WTC11 (cell line): ENCODE measurements at regions of chr17 and their contacts with region 1.

Region 1: DNA sequence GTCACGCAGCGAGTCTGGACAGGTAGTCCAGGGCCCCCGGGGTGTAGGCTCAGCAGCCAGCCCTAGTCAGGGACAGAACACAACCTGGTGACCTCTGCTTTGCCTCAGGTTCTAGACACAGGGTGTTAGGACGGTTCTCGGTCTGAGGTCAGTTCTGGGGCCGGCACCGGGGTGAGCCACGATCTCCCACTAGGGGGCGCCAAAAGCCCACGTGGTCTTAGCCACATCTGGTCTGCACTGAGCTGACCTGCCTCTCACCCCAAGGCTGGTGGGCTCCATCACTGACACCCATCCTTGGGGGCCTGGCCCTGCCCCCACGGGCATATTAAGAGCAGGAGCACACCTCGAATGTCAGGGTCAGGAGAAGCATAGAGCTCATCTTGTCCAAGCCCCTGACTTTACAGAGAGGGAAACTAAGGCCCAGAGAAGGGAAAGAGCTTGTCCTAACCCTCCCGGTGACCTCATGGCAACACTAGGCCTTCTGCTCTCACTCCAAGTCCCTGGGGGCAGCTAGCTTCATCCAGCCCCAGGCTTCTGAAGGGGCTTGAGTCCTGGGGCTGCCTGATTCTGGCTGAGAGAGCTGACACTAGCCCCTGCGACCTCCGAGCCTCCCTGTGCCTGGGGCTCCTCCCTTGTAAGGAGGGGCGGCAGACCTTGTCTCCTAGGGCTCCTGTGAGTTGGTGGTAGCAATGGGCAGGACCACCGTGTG is 9.0 kb downstream of the SLC5A10 start:
- DNase-seq: peak; percentile 93
- ATAC-seq: peak; percentile 95
- H3K4me3 Mint-ChIP-seq: no peak overlapping the region
- H3K27ac Mint-ChIP-seq: no peak overlapping the region
- H3K4me1 Mint-ChIP-seq: peaks cover 8% of the 10 kb centered on the region
- H3K27me3 Mint-ChIP-seq: no peaks in the 10 kb centered on the region
- CTCF ChIP-seq: peak; percentile 94

Region 2: GRCh38 chr17:18889658-18890057 is 71.3 kb before region 1 on chr17:
- CTCF ChIA-PET with region 1: no interaction called
- POLR2A ChIA-PET with region 1: no interaction called
- DNase-seq: no peak
- ATAC-seq: no peak
- H3K4me3 Mint-ChIP-seq: no peak overlapping the region
- H3K27ac Mint-ChIP-seq: no peak overlapping the region
- H3K4me1 Mint-ChIP-seq: no peaks in the 10 kb centered on the region
- H3K27me3 Mint-ChIP-seq: no peaks in the 10 kb centered on the region
- CTCF ChIP-seq: no peak

Region 3: DNA sequence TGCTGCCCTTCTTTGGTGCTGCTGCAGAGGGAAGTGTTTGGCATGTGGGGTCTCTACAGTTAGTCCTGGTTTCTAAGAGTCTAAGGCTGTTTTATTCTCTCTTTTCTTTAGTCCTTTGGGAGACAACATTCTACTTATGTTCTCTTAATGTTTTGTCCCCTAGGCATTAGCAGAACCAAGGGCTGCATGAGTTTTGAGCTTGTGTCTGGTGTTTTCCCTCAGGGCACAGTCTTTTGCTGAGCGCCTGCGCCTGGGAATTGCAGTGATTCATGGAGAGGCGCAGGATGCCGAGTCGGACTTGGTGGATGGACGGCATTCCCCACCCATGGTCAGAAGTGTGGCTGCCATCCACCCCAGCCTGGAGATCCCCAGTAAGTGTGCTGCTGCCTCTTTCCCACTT is 50.1 kb before region 1 on chr17:
- CTCF ChIA-PET with region 1: no interaction called
- POLR2A ChIA-PET with region 1: no interaction called
- DNase-seq: no peak
- ATAC-seq: no peak
- H3K4me3 Mint-ChIP-seq: no peak overlapping the region
- H3K27ac Mint-ChIP-seq: no peak overlapping the region
- H3K4me1 Mint-ChIP-seq: no peaks in the 10 kb centered on the region
- H3K27me3 Mint-ChIP-seq: no peaks in the 10 kb centered on the region
- CTCF ChIP-seq: no peak

Region 4: DNA sequence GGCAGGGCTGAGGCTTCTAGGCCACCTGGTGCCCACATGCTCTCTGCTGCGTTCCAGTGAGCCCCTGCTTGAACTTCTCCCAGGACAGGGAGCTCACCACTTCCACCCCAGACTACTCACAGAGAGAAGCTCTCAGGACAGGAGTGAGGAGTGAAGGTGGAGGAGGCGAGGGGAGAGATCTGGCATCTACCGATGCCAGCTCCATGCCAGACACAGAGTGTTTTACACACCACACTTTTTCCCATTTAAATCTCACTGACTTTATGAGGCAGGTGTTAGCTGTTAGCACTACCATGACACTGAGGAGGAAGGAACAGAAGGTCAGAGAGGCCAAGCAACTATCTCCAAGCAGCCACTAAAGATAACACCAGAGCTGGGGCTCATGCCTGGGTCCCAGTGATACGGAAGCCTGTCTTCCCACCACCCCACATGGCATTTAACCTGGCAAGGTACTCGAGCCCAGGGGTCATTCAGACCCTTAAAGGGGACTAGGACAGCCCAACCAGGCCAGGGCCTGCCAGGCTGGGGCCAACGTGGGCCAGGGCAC is 36.8 kb after region 1 on chr17:
- CTCF ChIA-PET with region 1: interaction called, 20 read pairs
- POLR2A ChIA-PET with region 1: no interaction called
- DNase-seq: no peak
- ATAC-seq: no peak
- H3K4me3 Mint-ChIP-seq: no peak overlapping the region
- H3K27ac Mint-ChIP-seq: no peak overlapping the region; the same call in 1 of the 2 replicates
- H3K4me1 Mint-ChIP-seq: peaks cover 20% of the 10 kb centered on the region
- H3K27me3 Mint-ChIP-seq: no peaks in the 10 kb centered on the region
- CTCF ChIP-seq: no peak

Region 5: GRCh38 chr17:19004421-19005136 is 43.6 kb after region 1 on chr17 and contains the start of gene FAM83G:
- CTCF ChIA-PET with region 1: interaction called, 20 read pairs
- POLR2A ChIA-PET with region 1: no interaction called
- DNase-seq: peak; percentile 76
- ATAC-seq: peak; percentile 56
- H3K4me3 Mint-ChIP-seq: peak within 1 kb of the TSS; percentile 87
- H3K27ac Mint-ChIP-seq: peak within 1 kb of the TSS; percentile 90
- H3K4me1 Mint-ChIP-seq: peaks cover 20% of the 10 kb centered on the region
- H3K27me3 Mint-ChIP-seq: no peaks in the 10 kb centered on the region; the same call in 1 of the 2 replicates
- CTCF ChIP-seq: no peak
- total RNA-seq, gene FAM83G: 26.6 to 31.4 TPM (median 27.7 TPM) in 3 replicates

Region 6: GRCh38 chr17:19024101-19025078 is 63.4 kb after region 1 on chr17:
- CTCF ChIA-PET with region 1: interaction called, 20 read pairs
- POLR2A ChIA-PET with region 1: no interaction called
- DNase-seq: no peak
- ATAC-seq: no peak
- H3K4me3 Mint-ChIP-seq: no peak overlapping the region
- H3K27ac Mint-ChIP-seq: peak overlapping the region; percentile 84
- H3K4me1 Mint-ChIP-seq: no peaks in the 10 kb centered on the region
- H3K27me3 Mint-ChIP-seq: no peaks in the 10 kb centered on the region; the same call in 1 of the 2 replicates
- CTCF ChIP-seq: no peak